Activated CD8-positive, alpha-beta T cell treated with anti-CD3 and anti-CD28 coated beads, Interleukin-2, amount 10 ng/mL, durations not matched to agents 7 days and 5 days (primary cell): ENCODE measurements at regions of chr10 and their contacts with region 1.

Region 1: GRCh38 chr10:128178319-128178958 is 52.2 kb upstream of the MKI67 start:
- DNase-seq: peak; percentile 76
- ATAC-seq: peak; percentile 67
- H3K4me3 Mint-ChIP-seq: no peak overlapping the region
- H3K27ac Mint-ChIP-seq: no peak overlapping the region
- H3K4me1 Mint-ChIP-seq: peaks cover 34% of the 10 kb centered on the region
- H3K27me3 Mint-ChIP-seq: peaks cover 4% of the 10 kb centered on the region

Region 2: DNA sequence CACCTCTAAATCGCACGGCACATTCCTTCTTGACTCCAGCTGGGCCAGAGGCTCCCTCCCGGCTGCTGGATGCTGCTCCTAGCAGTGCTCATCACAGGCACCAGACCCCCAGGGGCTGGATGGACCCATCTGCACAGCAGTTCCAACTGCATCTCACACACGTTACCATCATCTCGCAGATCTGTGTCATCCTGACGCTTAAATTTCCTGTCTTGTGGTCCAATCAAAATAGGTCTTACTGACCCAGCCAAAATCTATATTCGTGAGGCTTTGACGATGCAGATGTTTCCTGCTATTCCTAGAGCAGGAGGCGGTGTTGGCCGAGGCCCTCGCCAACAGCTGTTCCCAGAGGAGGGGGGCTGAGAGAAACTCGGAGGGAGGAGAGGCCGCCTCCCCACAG is 160.2 kb before region 1 on chr10:
- CTCF ChIA-PET with region 1: no interaction called
- POLR2A ChIA-PET with region 1: no interaction called
- DNase-seq: no peak
- ATAC-seq: no peak
- H3K4me3 Mint-ChIP-seq: no peak overlapping the region
- H3K27ac Mint-ChIP-seq: no peak overlapping the region
- H3K4me1 Mint-ChIP-seq: peaks cover 3% of the 10 kb centered on the region
- H3K27me3 Mint-ChIP-seq: no peaks in the 10 kb centered on the region

Region 3: DNA sequence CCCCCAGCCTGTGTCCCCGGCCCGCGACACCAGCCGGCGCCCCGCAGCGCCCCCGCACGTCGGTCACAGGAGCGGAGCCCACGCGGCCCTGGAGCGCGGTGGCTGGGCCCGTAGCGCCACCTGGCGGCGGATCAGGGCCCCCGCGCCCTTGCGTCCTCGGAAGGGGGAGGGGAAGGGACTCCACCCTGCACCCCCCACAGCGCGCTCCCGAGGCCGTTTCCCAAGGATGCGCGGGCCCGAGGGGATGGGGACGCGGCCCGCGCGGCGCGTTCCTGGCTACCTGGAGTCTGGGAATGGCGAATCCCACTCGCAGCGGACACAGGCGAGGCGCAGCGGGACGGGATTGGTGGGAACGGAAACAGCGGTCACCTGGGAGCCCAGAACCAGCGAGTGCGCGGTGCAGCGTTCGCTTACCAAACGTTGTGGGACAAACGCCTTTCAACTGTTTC is 28.4 kb before region 1 on chr10:
- CTCF ChIA-PET with region 1: interaction called, 19 read pairs
- POLR2A ChIA-PET with region 1: interaction called, 5 read pairs
- DNase-seq: peak; percentile 83
- ATAC-seq: peak; percentile 98
- H3K4me3 Mint-ChIP-seq: peak overlapping the region; percentile 71
- H3K27ac Mint-ChIP-seq: no peak overlapping the region
- H3K4me1 Mint-ChIP-seq: peaks cover 23% of the 10 kb centered on the region
- H3K27me3 Mint-ChIP-seq: peaks cover 2% of the 10 kb centered on the region

Region 4: GRCh38 chr10:128161031-128161430 is 17.4 kb before region 1 on chr10:
- CTCF ChIA-PET with region 1: interaction called, 14 read pairs
- POLR2A ChIA-PET with region 1: interaction called, 3 read pairs
- DNase-seq: no peak
- ATAC-seq: no peak
- H3K4me3 Mint-ChIP-seq: no peak overlapping the region
- H3K27ac Mint-ChIP-seq: peak overlapping the region; percentile 4
- H3K4me1 Mint-ChIP-seq: peaks cover 26% of the 10 kb centered on the region
- H3K27me3 Mint-ChIP-seq: peaks cover 15% of the 10 kb centered on the region

Region 5: GRCh38 chr10:128206676-128207075 is 28.2 kb after region 1 on chr10:
- CTCF ChIA-PET with region 1: interaction called, 137 read pairs
- POLR2A ChIA-PET with region 1: interaction called, 7 read pairs
- DNase-seq: no peak
- ATAC-seq: no peak
- H3K4me3 Mint-ChIP-seq: no peak overlapping the region
- H3K27ac Mint-ChIP-seq: no peak overlapping the region
- H3K4me1 Mint-ChIP-seq: peaks cover 5% of the 10 kb centered on the region
- H3K27me3 Mint-ChIP-seq: peaks cover 11% of the 10 kb centered on the region

Region 6: GRCh38 chr10:128211953-128212727 is 33.7 kb after region 1 on chr10:
- CTCF ChIA-PET with region 1: interaction called, 137 read pairs
- POLR2A ChIA-PET with region 1: interaction called, 7 read pairs
- DNase-seq: peak; percentile 87
- ATAC-seq: peak; percentile 80
- H3K4me3 Mint-ChIP-seq: peak overlapping the region; percentile 71
- H3K27ac Mint-ChIP-seq: peak overlapping the region; percentile 78
- H3K4me1 Mint-ChIP-seq: peaks cover 16% of the 10 kb centered on the region
- H3K27me3 Mint-ChIP-seq: peaks cover 10% of the 10 kb centered on the region

Region 7: GRCh38 chr10:128362514-128362913 is 184.1 kb after region 1 on chr10:
- CTCF ChIA-PET with region 1: no interaction called
- POLR2A ChIA-PET with region 1: no interaction called
- DNase-seq: no peak
- ATAC-seq: no peak
- H3K4me3 Mint-ChIP-seq: no peak overlapping the region
- H3K27ac Mint-ChIP-seq: no peak overlapping the region
- H3K4me1 Mint-ChIP-seq: no peaks in the 10 kb centered on the region
- H3K27me3 Mint-ChIP-seq: no peaks in the 10 kb centered on the region